ENCODE measurements at regions of chr11 and their contacts with region 1.

Region 1: GRCh38 chr11:128522055-128522942 is 65.1 kb downstream of the ETS1 start:
- DNase-seq: peak; percentile 94
- H3K4me3 Mint-ChIP-seq: peak overlapping the region; percentile 97
- H3K27ac Mint-ChIP-seq: peak overlapping the region; percentile 96
- H3K4me1 Mint-ChIP-seq: peaks cover 42% of the 10 kb centered on the region
- H3K27me3 Mint-ChIP-seq: no peaks in the 10 kb centered on the region

Region 2: GRCh38 chr11:128039140-128040021 is 482.9 kb before region 1 on chr11:
- CTCF ChIA-PET with region 1: no interaction called
- POLR2A ChIA-PET with region 1: interaction called, 4 read pairs
- intact Hi-C with region 1: loop called (anchors 5 kb)
- DNase-seq: peak; percentile 90
- H3K4me3 Mint-ChIP-seq: peak overlapping the region; percentile 61
- H3K27ac Mint-ChIP-seq: peak overlapping the region; percentile 89
- H3K4me1 Mint-ChIP-seq: peaks cover 52% of the 10 kb centered on the region
- H3K27me3 Mint-ChIP-seq: no peaks in the 10 kb centered on the region

Region 3: DNA sequence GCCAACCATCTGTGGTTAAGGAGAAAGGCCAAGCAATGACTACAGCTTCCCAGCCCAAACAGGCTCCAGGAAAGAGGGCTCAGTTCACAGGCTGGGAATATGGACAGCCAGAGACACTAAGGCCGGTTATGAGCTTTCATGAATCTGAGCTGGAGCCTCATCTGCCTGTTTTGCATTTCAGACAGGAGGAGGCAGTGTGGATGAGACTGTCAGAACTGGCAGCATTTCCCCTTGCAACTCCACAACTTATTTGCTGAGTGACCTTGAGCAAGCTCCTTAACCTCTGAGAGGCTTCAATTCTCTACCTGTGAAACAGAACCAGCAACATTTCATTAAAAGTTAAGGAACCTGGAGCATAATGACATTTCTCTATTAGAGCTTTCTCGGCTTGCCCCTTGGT is 198.9 kb before region 1 on chr11:
- CTCF ChIA-PET with region 1: interaction called, 6 read pairs
- POLR2A ChIA-PET with region 1: interaction called, 7 read pairs
- intact Hi-C with region 1: loop called (anchors 2 kb)
- DNase-seq: peak; percentile 65
- H3K4me3 Mint-ChIP-seq: peak overlapping the region; percentile 36
- H3K27ac Mint-ChIP-seq: peak overlapping the region; percentile 94
- H3K4me1 Mint-ChIP-seq: peaks cover 88% of the 10 kb centered on the region
- H3K27me3 Mint-ChIP-seq: no peaks in the 10 kb centered on the region

Region 4: DNA sequence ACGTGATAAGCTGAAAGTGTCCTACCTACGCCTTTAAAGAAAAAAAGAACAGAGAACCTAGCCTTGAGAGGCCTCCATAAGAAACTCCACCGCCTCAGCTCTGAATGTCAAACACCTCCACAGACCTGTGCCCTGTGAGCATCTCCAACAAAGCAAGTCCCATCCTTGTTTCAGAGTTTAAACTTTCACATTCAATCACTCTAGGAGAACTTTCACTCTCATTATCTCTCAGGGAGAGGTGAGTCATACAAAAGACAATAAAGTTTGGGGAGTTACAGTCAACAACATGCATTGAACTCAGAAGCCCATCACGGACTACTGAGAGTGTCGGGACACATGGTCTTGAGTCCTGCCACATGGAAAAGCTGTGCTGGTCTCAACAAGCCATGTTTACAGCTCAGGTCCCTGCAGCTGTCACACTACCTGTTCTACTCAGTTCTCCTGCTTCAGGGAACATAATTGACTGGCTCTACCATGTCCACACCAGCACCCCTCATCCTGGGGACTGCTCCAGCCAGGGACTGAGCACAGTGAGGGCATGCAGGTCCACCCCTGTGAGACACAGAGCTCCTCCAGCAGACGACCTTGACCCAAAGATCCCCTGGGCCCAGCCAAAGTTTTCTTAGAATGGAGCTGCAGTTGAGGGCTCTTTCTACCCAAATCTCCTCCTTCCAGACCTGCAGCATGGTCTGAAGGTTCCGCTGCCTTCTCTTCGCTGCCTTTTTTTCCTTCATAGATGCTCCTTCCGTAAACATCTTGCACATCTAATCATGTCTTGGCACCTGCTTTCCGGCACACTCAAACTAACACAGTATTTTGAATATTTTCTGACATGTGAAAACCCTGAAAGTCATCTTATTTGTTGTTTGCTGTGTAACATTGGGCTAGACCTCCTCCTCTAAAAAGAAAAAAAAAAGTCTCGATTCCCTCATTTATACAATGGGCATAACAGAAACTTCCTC is 49.9 kb before region 1 on chr11:
- CTCF ChIA-PET with region 1: interaction called, 4 read pairs
- POLR2A ChIA-PET with region 1: interaction called, 86 read pairs
- intact Hi-C with region 1: loop called (anchors 1 kb)
- DNase-seq: peak; percentile 83
- H3K4me3 Mint-ChIP-seq: peak overlapping the region; percentile 64
- H3K27ac Mint-ChIP-seq: peak overlapping the region; percentile 99
- H3K4me1 Mint-ChIP-seq: peaks cover 97% of the 10 kb centered on the region
- H3K27me3 Mint-ChIP-seq: no peaks in the 10 kb centered on the region

Region 5: DNA sequence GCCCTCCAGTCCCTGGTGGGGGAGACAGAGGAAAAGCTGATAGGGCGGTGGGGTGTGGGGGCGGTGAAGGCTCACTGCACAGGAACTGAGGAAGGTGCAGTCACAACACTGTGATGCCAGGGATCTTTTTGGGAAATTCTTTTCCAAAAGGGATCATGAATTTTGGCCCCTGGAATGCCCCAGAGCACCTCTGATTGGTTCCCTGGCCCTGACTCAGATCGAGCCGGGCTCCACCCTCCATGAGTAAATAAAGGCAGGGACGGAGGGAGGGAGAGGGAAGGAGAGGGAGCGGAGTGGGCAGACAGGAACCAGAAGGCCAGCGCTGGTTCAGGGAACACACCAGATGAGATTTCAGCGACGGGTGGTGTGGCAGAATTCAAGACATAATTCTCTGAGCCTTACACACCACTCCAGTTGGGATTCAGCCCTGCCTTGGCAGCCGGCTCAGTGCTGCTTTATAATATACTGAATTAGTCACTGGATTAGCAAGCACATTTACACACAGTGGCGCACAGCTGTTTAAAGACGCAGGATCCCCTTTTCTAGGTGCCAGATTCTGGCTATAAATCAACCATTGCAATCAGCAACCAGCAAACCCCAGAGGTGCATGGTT is 15.2 kb before region 1 on chr11:
- CTCF ChIA-PET with region 1: interaction called, 26 read pairs
- POLR2A ChIA-PET with region 1: interaction called, 600 read pairs
- intact Hi-C with region 1: loop called (anchors 1 kb)
- DNase-seq: peak; percentile 74
- H3K4me3 Mint-ChIP-seq: peak overlapping the region; percentile 77
- H3K27ac Mint-ChIP-seq: peak overlapping the region; percentile 96
- H3K4me1 Mint-ChIP-seq: peaks cover 90% of the 10 kb centered on the region
- H3K27me3 Mint-ChIP-seq: no peaks in the 10 kb centered on the region

Region 6: DNA sequence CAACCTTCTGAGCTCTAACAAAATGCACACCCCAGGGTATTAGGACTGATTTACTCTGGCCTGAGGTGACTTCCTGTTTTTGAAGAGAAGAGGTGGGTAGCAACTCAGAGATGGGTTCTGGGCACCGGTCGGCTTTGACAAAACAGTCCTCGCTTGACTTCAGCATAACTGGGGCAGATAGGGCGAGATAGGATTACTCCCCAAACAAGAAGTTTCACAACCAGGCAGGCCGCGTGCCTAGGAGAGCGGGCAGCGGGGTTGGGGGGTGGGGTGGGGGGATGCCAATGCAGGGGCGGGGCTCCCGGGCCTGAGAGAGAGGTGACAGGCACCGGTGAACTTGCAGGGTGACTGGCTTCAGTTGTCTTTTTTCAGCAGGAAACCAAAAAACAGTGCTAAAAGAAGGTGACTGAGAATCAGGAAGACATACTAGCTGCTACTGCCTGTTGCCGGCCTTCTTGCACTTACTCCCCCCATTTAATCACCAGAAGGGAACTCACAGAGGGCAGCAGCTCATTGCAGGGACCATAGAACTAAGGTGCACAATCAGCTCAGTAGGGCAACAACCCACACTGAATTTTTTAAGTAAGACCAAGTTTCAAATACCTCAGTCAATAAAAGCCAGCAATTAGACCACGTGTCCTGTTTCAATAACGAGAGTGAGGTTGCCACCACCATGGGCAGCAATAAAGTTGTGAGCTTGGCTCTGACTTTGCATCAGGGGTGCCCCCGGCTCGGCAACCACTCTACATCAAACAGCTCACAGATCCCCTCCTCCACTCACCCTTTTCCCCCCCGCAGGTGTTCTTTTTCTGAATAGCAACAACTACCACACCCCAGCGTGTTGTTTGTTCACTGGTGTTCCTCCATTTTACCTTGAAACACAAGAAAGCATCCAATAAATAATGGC is 102.2 kb after region 1 on chr11:
- CTCF ChIA-PET with region 1: interaction called, 264 read pairs
- POLR2A ChIA-PET with region 1: interaction called, 81 read pairs
- intact Hi-C with region 1: loop called (anchors 1 kb)
- DNase-seq: peak; percentile 83
- H3K4me3 Mint-ChIP-seq: peak overlapping the region; percentile 57
- H3K27ac Mint-ChIP-seq: peak overlapping the region; percentile 94
- H3K4me1 Mint-ChIP-seq: peaks cover 95% of the 10 kb centered on the region
- H3K27me3 Mint-ChIP-seq: no peaks in the 10 kb centered on the region

Region 7: DNA sequence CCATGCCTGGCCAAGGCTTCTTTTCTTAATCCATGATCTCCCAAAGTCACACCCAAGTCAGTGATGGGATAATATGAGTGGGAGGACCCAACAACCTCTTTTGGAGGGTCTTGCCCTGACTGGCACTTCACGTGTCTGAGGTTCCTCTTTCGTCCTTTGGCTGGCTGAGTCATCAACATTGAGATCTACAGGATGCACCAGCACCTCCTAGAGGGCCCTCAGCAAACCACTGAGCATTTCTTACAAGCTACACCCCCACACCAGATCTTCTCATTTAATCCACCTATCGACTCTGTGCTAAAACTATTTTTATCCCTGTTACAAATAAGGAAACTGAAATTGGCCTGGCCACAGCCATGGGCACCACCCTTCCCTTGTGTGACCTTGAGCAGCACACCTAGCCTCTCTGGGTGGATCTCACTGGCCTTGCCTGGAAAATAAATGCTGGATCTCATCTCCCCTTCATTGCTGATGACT is 235.0 kb after region 1 on chr11:
- CTCF ChIA-PET with region 1: interaction called, 6 read pairs
- POLR2A ChIA-PET with region 1: interaction called, 5 read pairs
- intact Hi-C with region 1: loop called (anchors 1 kb)
- DNase-seq: peak; percentile 84
- H3K4me3 Mint-ChIP-seq: peak overlapping the region; percentile 42
- H3K27ac Mint-ChIP-seq: peak overlapping the region; percentile 89
- H3K4me1 Mint-ChIP-seq: peaks cover 81% of the 10 kb centered on the region
- H3K27me3 Mint-ChIP-seq: no peaks in the 10 kb centered on the region

Measured in activated CD4-positive, alpha-beta memory T cell treated with anti-CD3 and anti-CD28 coated beads for 36 hours (primary cell).